HCT116 (cell line): ENCODE measurements at regions of chr19 and their contacts with region 1.

Region 1: DNA sequence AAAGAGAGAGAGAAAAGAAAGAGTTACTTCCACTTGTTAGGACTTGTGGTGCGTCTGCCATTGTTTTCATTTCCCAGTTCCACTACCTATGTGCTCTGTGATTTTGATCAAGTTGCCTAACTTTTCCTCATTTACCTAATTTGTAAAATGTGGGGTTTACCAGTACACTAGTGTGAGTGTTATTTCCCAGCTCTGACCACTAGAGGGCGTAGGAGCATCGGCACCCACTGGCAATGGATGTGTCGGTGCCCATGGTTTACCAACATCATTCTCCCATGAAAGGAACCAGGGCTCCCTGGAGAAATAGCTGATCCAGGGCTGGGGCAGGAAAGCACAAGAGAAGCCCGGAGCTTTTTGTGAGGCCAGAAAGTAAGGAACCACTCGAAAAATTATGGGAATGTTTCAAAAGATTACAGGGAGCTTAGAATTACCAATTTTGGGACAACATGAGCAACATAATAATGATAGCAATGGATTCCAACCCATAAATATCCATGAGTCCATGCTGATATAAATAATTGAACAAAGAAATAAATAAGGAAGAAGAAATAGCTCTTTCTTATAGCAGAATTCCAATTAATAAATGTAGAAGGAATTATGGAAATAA is 15.1 kb upstream of the CEACAM4 start:
- DNase-seq: peak; percentile 37
- ATAC-seq: peak; percentile 94
- H3K4me3 ChIP-seq: no peak overlapping the region
- H3K27ac ChIP-seq: no peak overlapping the region
- H3K4me1 ChIP-seq: no peaks in the 10 kb centered on the region
- H3K27me3 ChIP-seq: peaks cover 38% of the 10 kb centered on the region
- CTCF ChIP-seq: peak; percentile 84 to 98 (median 87)
- POLR2A ChIP-seq: no peak
- RAD21 ChIP-seq: peak; percentile 75

Region 2: GRCh38 chr19:41248895-41249294 is 393.1 kb before region 1 on chr19:
- CTCF ChIA-PET with region 1: no interaction called
- POLR2A ChIA-PET with region 1: no interaction called
- RAD21 ChIA-PET with region 1: no interaction called
- intact Hi-C with region 1: no loop called
- DNase-seq: no peak
- ATAC-seq: peak; percentile 51; the same call in 1 of the 2 replicates
- H3K4me3 ChIP-seq: no peak overlapping the region
- H3K27ac ChIP-seq: no peak overlapping the region
- H3K4me1 ChIP-seq: no peaks in the 10 kb centered on the region
- H3K27me3 ChIP-seq: no peaks in the 10 kb centered on the region
- CTCF ChIP-seq: no peak
- POLR2A ChIP-seq: no peak
- RAD21 ChIP-seq: no peak

Region 3: GRCh38 chr19:41657157-41657556 is 15.2 kb after region 1 on chr19:
- CTCF ChIA-PET with region 1: interaction called, 38 read pairs
- POLR2A ChIA-PET with region 1: no interaction called
- RAD21 ChIA-PET with region 1: no interaction called
- intact Hi-C with region 1: no loop called
- DNase-seq: no peak
- ATAC-seq: no peak
- H3K4me3 ChIP-seq: no peak overlapping the region
- H3K27ac ChIP-seq: no peak overlapping the region
- H3K4me1 ChIP-seq: no peaks in the 10 kb centered on the region
- H3K27me3 ChIP-seq: peaks cover 34% of the 10 kb centered on the region
- CTCF ChIP-seq: no peak
- POLR2A ChIP-seq: no peak
- RAD21 ChIP-seq: no peak

Region 4: GRCh38 chr19:41671491-41671890 is 29.5 kb after region 1 on chr19:
- CTCF ChIA-PET with region 1: no interaction called
- POLR2A ChIA-PET with region 1: no interaction called
- RAD21 ChIA-PET with region 1: no interaction called
- intact Hi-C with region 1: no loop called
- DNase-seq: no peak
- ATAC-seq: no peak
- H3K4me3 ChIP-seq: no peak overlapping the region
- H3K27ac ChIP-seq: no peak overlapping the region
- H3K4me1 ChIP-seq: no peaks in the 10 kb centered on the region
- H3K27me3 ChIP-seq: peaks cover 59% of the 10 kb centered on the region
- CTCF ChIP-seq: no peak
- POLR2A ChIP-seq: no peak
- RAD21 ChIP-seq: no peak

Region 5: DNA sequence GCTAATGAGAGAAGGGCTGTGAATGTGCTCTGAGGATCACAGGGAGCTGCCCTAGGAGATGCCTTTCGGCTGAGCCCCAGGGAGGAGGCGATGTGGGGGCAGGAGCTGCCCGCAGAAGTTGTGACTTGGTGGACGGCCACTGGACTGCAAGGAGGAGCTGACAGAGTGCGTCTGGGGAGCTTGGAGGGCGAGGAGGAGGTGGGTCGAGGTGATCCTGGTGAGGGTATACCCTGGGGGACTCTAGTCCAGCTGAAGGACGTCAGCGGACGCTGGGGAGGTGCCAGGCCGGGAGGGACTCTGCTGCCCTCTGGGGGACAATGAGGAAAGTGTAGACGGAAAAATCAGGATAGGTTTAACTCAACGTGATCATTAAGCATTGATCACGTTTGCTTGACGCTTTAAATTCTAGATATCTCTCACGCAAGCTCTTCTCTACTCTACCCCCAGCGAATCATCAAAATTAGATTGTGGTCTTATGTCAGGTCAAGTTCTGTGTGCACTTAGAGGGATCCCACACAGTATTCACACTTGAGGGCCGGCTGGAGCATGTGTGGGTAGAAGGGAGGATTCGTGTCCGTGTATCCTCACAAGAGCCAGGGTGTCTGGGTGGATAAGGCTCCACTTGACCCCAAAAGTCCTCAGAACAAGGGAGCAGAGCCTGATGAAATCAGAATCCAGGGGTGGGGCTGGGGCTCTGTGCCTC is 49.4 kb after region 1 on chr19:
- CTCF ChIA-PET with region 1: interaction called, 37 read pairs
- POLR2A ChIA-PET with region 1: no interaction called
- RAD21 ChIA-PET with region 1: interaction called in 1 of 2 experiments, 3 read pairs
- intact Hi-C with region 1: loop called (anchors 5 kb)
- DNase-seq: no peak
- ATAC-seq: peak; percentile 90
- H3K4me3 ChIP-seq: no peak overlapping the region
- H3K27ac ChIP-seq: no peak overlapping the region
- H3K4me1 ChIP-seq: peaks cover 0 to 5% of the 10 kb centered on the region in 2 experiments; a peak in 1 of 4 replicates
- H3K27me3 ChIP-seq: peaks cover 39% of the 10 kb centered on the region
- CTCF ChIP-seq: peak; percentile 54 to 83 (median 83)
- POLR2A ChIP-seq: no peak
- RAD21 ChIP-seq: peak; percentile 44

Region 6: GRCh38 chr19:41746593-41747227 is 104.7 kb after region 1 on chr19:
- CTCF ChIA-PET with region 1: interaction called, 4 read pairs
- POLR2A ChIA-PET with region 1: no interaction called
- RAD21 ChIA-PET with region 1: no interaction called
- intact Hi-C with region 1: loop called (anchors 5 kb)
- DNase-seq: peak; percentile 47
- ATAC-seq: peak; percentile 97
- H3K4me3 ChIP-seq: no peak overlapping the region
- H3K27ac ChIP-seq: no peak overlapping the region
- H3K4me1 ChIP-seq: no peaks in the 10 kb centered on the region
- H3K27me3 ChIP-seq: peaks cover 62% of the 10 kb centered on the region
- CTCF ChIP-seq: peak; percentile 56 to 84 (median 67); a peak in 5 of 6 replicates
- POLR2A ChIP-seq: no peak
- RAD21 ChIP-seq: peak; percentile 74